PC-3 (cell line): ENCODE measurements at regions of chr3 and their contacts with region 1.

Region 1: DNA sequence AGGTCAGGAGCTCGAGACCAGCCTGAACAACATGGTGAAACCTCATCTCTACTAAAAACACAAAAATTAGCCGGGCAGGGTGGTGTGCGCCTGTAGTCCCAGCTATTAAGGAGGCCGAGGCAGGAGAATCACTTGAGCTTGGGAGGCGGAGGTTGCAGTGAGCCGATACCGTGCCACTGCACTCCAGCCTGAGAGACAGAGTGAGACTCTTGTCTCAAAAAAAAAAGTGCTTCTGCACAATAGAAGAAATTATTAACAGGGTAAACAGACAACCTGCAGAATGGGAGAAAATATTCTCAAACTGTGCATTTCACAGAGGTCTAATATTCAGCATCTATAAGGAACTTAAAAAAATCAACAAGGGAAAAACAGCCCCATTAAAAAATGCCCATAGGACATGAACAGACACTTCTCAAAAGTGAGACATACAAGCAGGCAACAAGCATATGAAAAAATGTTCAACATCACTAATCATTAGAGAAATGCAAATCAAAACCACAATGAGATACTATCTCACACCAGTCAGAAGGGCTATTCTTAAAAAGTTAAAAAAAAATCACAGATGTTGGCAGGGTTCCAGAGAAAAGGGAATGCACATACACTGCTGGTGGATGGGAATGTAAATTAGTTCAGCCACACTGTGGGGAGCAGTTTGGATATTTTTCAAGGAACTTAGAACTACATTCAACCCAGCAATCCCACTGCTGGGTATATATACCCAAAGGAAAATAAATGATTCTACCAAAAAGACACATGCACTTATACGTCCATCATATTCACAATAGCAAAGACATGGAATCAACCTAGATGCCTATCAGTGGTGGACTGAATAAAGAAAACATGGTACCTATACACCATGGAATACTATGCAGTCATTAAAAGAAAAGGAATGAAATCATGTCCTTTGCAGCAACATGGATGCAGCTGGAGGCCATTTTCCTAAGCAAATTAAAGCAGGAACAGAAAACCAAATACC is 75.5 kb downstream of the MSL2 start:
- DNase-seq: no peak
- ATAC-seq: no peak
- H3K4me3 ChIP-seq: no peak overlapping the region
- H3K27ac ChIP-seq: no peak overlapping the region
- H3K4me1 ChIP-seq: no peaks in the 10 kb centered on the region
- H3K27me3 ChIP-seq: no peaks in the 10 kb centered on the region
- CTCF ChIP-seq: no peak

Region 2: GRCh38 chr3:136142592-136142991 is 21.9 kb after region 1 on chr3:
- CTCF ChIA-PET with region 1: no interaction called
- POLR2A ChIA-PET with region 1: no interaction called
- intact Hi-C with region 1: loop called (anchors 1 kb)
- DNase-seq: peak; percentile 84
- ATAC-seq: peak; percentile 91
- H3K4me3 ChIP-seq: no peak overlapping the region
- H3K27ac ChIP-seq: peak overlapping the region; percentile 57
- H3K4me1 ChIP-seq: peaks cover 21% of the 10 kb centered on the region
- H3K27me3 ChIP-seq: no peaks in the 10 kb centered on the region
- CTCF ChIP-seq: no peak

Region 3: DNA sequence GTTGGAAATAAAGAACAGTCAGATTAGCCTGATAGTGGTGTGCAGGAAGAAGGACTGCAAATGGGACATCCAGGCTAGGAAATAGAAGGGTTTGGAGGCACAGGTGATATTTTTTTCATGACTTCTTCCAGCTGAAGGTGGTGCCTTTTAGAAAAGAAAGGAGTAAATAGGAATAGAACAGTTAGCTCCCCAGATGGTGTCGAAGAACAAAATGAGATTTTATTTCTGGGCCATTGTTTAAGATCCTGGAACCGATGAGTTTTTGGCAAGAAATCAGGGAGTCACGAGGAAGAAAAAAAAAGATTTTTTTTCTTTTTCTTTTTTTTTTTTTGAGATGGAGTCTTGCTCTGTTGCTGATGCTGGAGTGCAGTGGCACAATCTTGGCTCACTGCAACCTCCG is 731.5 kb after region 1 on chr3:
- CTCF ChIA-PET with region 1: no interaction called
- POLR2A ChIA-PET with region 1: no interaction called
- intact Hi-C with region 1: no loop called
- DNase-seq: no peak
- ATAC-seq: no peak
- H3K4me3 ChIP-seq: no peak overlapping the region
- H3K27ac ChIP-seq: no peak overlapping the region
- H3K4me1 ChIP-seq: no peaks in the 10 kb centered on the region
- H3K27me3 ChIP-seq: no peaks in the 10 kb centered on the region
- CTCF ChIP-seq: no peak